Caco-2 (cell line): ENCODE measurements at regions of chr1 and their contacts with region 1.

Region 1: GRCh38 chr1:84944767-84945486 is 51.9 kb upstream of the LPAR3 start:
- DNase-seq: peak; percentile 65 to 74
- H3K4me3 ChIP-seq: no peak overlapping the region
- H3K4me3 Mint-ChIP-seq: no peak overlapping the region
- H3K27ac Mint-ChIP-seq: no peak overlapping the region
- H3K4me1 ChIP-seq: no peaks in the 10 kb centered on the region
- H3K4me1 Mint-ChIP-seq: no peaks in the 10 kb centered on the region
- H3K27me3 ChIP-seq: no peaks in the 10 kb centered on the region
- H3K27me3 Mint-ChIP-seq: peaks cover 11% of the 10 kb centered on the region
- CTCF ChIP-seq: peak; percentile 53 to 68

Region 2: GRCh38 chr1:84913555-84913892 is 31.4 kb before region 1 on chr1:
- CTCF ChIA-PET with region 1: no interaction called
- POLR2A ChIA-PET with region 1: no interaction called
- intact Hi-C with region 1: no loop called
- DNase-seq: peak in 1 of 2 experiments; percentile 16
- H3K4me3 ChIP-seq: no peak overlapping the region
- H3K4me3 Mint-ChIP-seq: no peak overlapping the region
- H3K27ac Mint-ChIP-seq: no peak overlapping the region
- H3K4me1 ChIP-seq: no peaks in the 10 kb centered on the region
- H3K4me1 Mint-ChIP-seq: no peaks in the 10 kb centered on the region
- H3K27me3 ChIP-seq: no peaks in the 10 kb centered on the region
- H3K27me3 Mint-ChIP-seq: peaks cover 13% of the 10 kb centered on the region
- CTCF ChIP-seq: no peak

Region 3: GRCh38 chr1:84959294-84959693 is 14.4 kb after region 1 on chr1:
- CTCF ChIA-PET with region 1: interaction called, 10 read pairs
- POLR2A ChIA-PET with region 1: no interaction called
- intact Hi-C with region 1: no loop called
- DNase-seq: no peak
- H3K4me3 ChIP-seq: no peak overlapping the region
- H3K4me3 Mint-ChIP-seq: no peak overlapping the region
- H3K27ac Mint-ChIP-seq: no peak overlapping the region
- H3K4me1 ChIP-seq: peaks cover 10% of the 10 kb centered on the region
- H3K4me1 Mint-ChIP-seq: no peaks in the 10 kb centered on the region
- H3K27me3 ChIP-seq: no peaks in the 10 kb centered on the region
- H3K27me3 Mint-ChIP-seq: no peaks in the 10 kb centered on the region
- CTCF ChIP-seq: no peak

Region 4: GRCh38 chr1:84997667-84998600 is 53.0 kb after region 1 on chr1:
- CTCF ChIA-PET with region 1: no interaction called
- POLR2A ChIA-PET with region 1: no interaction called
- intact Hi-C with region 1: loop called (anchors 2 kb)
- DNase-seq: peak in 1 of 2 experiments; percentile 4
- H3K4me3 ChIP-seq: peak overlapping the region; percentile 30
- H3K4me3 Mint-ChIP-seq: peak overlapping the region; percentile 73
- H3K27ac Mint-ChIP-seq: no peak overlapping the region
- H3K4me1 ChIP-seq: 0 out of 2 replicates have a peak, but pooled peaks cover 5% of the 10 kb centered on the region
- H3K4me1 Mint-ChIP-seq: no peaks in the 10 kb centered on the region
- H3K27me3 ChIP-seq: no peaks in the 10 kb centered on the region; the same call in 1 of the 2 replicates
- H3K27me3 Mint-ChIP-seq: peaks cover 28% of the 10 kb centered on the region
- CTCF ChIP-seq: no peak

Region 5: DNA sequence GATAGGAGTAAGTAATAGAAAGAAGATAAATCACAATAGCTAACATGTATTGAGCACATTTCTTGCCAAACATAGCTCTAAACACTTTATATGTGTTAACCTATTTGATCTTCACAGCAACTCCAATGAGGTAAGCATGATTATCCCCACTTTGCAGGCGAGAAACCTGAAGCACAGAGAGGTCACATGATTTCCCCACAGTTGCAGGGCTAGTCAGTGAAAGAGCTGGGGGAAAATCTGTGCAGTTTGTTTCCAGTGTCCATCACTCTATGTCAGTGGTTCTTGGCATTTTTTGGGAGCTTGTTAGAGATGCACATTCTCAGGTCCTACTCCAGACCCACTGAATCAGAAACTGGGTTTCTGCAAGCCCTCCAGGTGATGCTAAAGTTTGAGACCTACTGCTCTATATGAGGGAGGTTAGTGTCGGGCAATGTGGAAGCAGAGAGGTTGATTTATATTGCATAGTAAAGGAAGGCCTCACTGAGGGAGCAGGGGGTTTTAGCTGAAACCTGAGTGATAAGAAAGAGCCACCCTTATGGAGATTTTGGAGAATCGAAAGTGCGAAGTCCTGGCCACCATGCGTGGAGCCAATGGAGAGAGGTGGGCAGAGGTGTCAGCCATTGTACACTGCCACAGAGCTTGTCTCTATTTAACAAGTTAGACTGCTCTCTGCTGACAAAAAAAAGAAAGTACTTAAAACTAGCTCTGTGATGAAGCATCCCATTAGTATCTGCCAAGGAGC is 82.5 kb after region 1 on chr1:
- CTCF ChIA-PET with region 1: interaction called, 97 read pairs
- POLR2A ChIA-PET with region 1: no interaction called
- intact Hi-C with region 1: loop called (anchors 1 kb)
- DNase-seq: peak in 1 of 2 experiments; percentile 2
- H3K4me3 ChIP-seq: no peak overlapping the region
- H3K4me3 Mint-ChIP-seq: peak overlapping the region; percentile 27
- H3K27ac Mint-ChIP-seq: no peak overlapping the region
- H3K4me1 ChIP-seq: no peaks in the 10 kb centered on the region
- H3K4me1 Mint-ChIP-seq: peaks cover 7% of the 10 kb centered on the region
- H3K27me3 ChIP-seq: no peaks in the 10 kb centered on the region
- H3K27me3 Mint-ChIP-seq: no peaks in the 10 kb centered on the region
- CTCF ChIP-seq: no peak

Region 6: DNA sequence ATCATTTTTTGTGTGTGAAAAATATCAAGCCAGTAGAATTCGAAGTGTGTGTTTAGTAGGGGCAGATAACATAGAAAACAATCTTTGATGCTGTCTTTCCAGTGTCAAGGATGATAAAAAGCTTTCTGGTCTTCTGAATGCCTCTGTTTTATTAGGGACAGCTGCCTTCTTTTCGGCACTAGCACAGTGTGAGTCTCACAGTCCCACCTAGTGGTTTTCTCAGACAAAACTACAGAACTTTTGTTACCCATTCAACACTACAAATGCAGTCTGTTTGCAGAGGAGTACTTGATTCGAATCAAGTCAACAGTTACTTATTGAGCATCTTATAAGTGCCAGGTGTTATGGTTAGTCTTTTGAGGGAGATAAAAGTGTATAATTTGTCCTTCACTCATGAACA is 134.0 kb after region 1 on chr1:
- CTCF ChIA-PET with region 1: interaction called, 15 read pairs
- POLR2A ChIA-PET with region 1: no interaction called
- intact Hi-C with region 1: loop called (anchors 1 kb)
- DNase-seq: peak in 1 of 2 experiments; percentile 4
- H3K4me3 ChIP-seq: no peak overlapping the region
- H3K4me3 Mint-ChIP-seq: no peak overlapping the region
- H3K27ac Mint-ChIP-seq: no peak overlapping the region
- H3K4me1 ChIP-seq: no peaks in the 10 kb centered on the region
- H3K4me1 Mint-ChIP-seq: no peaks in the 10 kb centered on the region
- H3K27me3 ChIP-seq: no peaks in the 10 kb centered on the region
- H3K27me3 Mint-ChIP-seq: peaks cover 3% of the 10 kb centered on the region
- CTCF ChIP-seq: peak in 1 of 2 experiments; percentile 25

Region 7: DNA sequence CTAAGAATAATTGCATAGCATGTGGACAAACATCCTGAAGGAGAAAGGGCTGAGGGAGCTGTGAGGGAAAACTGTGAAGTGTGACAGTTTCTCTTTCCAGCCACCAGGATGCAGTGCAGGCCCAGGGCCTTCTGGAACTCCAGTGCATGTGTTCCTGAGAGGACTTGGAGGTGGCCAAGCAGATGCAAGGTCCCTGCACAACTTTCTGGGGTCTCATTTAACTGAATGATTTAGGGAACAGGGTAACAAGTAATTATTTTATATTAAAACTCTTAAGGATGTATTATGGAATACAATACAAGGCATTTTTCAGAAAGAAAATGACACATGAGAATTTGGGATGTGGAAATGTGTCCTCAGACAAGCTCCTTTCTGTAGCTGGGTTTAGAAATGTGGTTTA is 164.5 kb after region 1 on chr1:
- CTCF ChIA-PET with region 1: interaction called, 5 read pairs
- POLR2A ChIA-PET with region 1: no interaction called
- intact Hi-C with region 1: loop called (anchors 1 kb)
- DNase-seq: peak; percentile 51 to 57
- H3K4me3 ChIP-seq: no peak overlapping the region
- H3K4me3 Mint-ChIP-seq: no peak overlapping the region
- H3K27ac Mint-ChIP-seq: no peak overlapping the region
- H3K4me1 ChIP-seq: no peaks in the 10 kb centered on the region
- H3K4me1 Mint-ChIP-seq: peaks cover 5% of the 10 kb centered on the region
- H3K27me3 ChIP-seq: no peaks in the 10 kb centered on the region
- H3K27me3 Mint-ChIP-seq: peaks cover 3% of the 10 kb centered on the region
- CTCF ChIP-seq: peak; percentile 66 to 80

Region 8: DNA sequence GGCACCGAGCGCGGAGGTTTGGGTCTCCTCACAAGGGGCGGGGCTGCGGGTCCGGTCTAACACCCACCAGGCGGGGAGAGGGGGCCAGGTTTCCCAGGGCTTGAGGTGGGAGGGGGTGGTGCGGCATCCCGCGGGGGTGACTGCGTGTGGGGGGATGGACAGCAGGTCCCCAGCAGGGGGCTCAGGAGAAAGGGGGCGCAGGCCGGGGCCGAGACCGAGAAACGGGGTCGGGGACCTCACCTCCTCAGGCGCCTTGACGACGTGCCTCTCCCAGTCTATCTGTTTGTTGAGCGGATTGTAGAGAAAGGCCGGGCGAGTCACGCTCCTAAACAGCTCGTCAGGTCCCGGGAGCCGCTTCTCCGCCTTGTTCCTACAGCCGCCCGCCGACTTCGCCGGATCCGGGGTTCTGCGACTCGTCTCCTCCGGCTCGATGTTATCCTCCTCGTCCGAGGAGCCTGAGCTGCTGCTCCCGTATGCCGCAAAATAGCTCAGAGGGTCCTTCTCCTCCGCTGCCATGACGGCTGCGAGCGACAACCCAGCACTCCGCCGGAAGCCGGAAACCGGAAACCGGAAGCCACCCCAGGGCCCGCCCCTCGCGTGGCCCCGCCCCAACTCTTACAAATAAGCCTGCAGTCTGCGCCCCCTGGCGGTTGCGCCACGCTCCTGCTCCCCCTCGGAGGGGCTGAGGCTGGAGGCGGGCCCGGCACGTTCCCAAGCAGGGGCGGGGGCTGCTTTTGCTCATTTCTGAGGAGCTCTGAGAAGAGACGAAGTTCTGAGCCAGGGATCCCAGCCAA is 314.4 kb after region 1 on chr1 and contains the start of gene C1orf52:
- CTCF ChIA-PET with region 1: interaction called, 17 read pairs
- POLR2A ChIA-PET with region 1: no interaction called
- intact Hi-C with region 1: loop called (anchors 1 kb)
- DNase-seq: peak; percentile 90 to 94
- H3K4me3 ChIP-seq: peak within 1 kb of the TSS; percentile 80
- H3K4me3 Mint-ChIP-seq: peak within 1 kb of the TSS; percentile 95
- H3K27ac Mint-ChIP-seq: peak within 1 kb of the TSS; percentile 87
- H3K4me1 ChIP-seq: no peaks in the 10 kb centered on the region
- H3K4me1 Mint-ChIP-seq: peaks cover 15% of the 10 kb centered on the region
- H3K27me3 ChIP-seq: no peaks in the 10 kb centered on the region
- H3K27me3 Mint-ChIP-seq: no peaks in the 10 kb centered on the region
- CTCF ChIP-seq: peak; percentile 75 to 86
- total RNA-seq, gene C1orf52: 30.4 and 30.7 TPM in 2 replicates